ENCODE measurements at regions of chr9 and their contacts with region 1.

Region 1: DNA sequence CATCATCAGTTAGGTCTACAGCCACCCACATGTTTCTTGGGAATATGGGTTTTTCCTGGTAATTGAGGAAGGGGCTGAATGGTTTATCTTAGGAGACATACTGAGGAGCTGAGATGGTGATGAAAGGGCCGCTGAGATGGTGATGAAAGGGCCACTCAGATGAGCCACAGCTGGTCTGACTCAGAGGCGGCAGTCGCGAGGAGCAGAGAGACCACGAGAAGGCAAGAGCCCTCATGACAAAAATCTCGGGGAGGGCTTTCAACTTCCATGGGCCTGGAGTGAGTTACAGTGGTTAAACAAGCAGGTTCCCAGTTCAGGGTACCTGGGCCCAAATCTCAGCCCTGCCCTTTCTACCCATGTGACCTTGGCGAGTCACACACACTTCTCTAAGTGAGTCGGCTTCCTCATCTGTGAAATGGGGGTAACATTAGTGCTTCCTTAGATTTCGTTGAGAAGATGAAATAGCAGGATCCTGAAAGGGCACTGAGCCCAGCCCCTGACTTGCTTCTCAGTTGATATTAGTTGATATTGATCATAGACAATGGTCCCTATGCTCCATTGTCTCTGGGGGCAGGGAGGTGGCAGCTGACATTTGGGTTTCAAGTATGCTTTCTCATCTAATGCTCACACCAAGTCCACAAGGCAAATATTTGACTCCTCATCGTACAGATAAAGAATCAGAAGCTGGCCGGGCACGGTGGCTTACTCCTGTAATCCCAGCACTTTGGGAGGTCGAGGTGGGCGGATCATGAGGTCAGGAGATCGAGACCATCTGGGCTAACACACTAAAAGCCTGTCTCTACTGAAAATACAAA is 169.5 kb downstream of the RGS3 start:
- DNase-seq: no peak
- H3K4me3 Mint-ChIP-seq: no peak overlapping the region
- H3K27ac Mint-ChIP-seq: no peak overlapping the region
- H3K4me1 Mint-ChIP-seq: no peaks in the 10 kb centered on the region
- H3K27me3 Mint-ChIP-seq: no peaks in the 10 kb centered on the region

Region 2: GRCh38 chr9:113479174-113479621 is 153.8 kb before region 1 on chr9:
- intact Hi-C with region 1: no loop called
- DNase-seq: peak; percentile 9
- H3K4me3 Mint-ChIP-seq: no peak overlapping the region
- H3K27ac Mint-ChIP-seq: no peak overlapping the region
- H3K4me1 Mint-ChIP-seq: peaks cover 13% of the 10 kb centered on the region
- H3K27me3 Mint-ChIP-seq: peaks cover 16% of the 10 kb centered on the region

Region 3: GRCh38 chr9:113622600-113623400 is 10.2 kb before region 1 on chr9:
- intact Hi-C with region 1: loop called (anchors 1 kb)
- DNase-seq: peak; percentile 18
- H3K4me3 Mint-ChIP-seq: peak overlapping the region; percentile 43
- H3K27ac Mint-ChIP-seq: peak overlapping the region; percentile 93
- H3K4me1 Mint-ChIP-seq: peaks cover 47% of the 10 kb centered on the region
- H3K27me3 Mint-ChIP-seq: peaks cover 2% of the 10 kb centered on the region